ENCODE measurements at regions of chr7 and their contacts with region 1.

Region 1: DNA sequence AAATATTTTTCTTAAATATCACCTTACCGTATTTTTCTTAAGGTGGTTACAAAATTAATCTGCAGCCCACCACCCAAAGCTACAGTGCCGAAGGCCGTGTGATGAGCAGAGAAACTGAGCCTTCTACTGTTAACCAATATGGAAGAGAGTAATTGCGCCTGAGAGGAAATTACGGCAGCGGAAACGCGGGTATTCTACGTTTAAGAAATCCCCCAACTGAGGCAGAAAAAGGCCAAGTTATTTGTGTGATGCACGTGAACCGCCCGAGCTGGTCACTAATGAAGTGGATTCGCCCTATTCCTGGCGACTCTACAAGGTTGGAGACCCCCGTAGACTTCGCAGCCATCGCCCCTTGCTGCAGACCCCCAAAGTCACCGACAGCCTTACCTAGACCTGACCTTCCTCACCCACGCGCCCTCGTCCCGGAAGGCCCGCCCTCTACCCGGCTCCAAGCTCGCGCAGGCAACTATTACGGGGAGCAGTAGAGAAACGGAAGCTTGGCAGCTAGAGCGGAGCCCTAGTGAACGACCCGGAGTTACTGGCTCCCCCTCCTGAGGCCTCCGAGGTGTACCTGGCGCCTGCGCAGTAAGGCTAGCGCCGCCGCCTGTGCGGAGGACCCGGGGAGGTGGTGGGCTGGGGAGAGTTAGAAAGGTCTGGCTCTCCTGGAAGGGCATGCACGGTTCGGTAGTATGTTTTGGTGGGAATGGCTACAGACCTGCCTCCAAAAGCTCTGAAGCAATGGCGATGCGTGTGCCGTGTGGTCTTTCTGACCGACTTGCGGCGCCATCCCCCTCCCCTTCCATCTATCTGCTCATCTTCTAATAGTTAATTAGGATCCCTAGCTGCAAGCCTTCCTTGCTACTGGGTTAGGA is at the start of gene MRPS33:
- DNase-seq: peak; percentile 79 to 97 (median 96)
- ATAC-seq: peak; percentile 99
- H3K4me3 ChIP-seq: peak within 1 kb of the TSS; percentile 82
- H3K4me3 Mint-ChIP-seq: peak within 1 kb of the TSS; percentile 85 to 99 (median 98)
- H3K27ac ChIP-seq: peak within 1 kb of the TSS; percentile 95
- H3K27ac Mint-ChIP-seq: peak within 1 kb of the TSS; percentile 97 to 100 (median 100)
- H3K4me1 ChIP-seq: peaks cover 8 to 16% of the 10 kb centered on the region in 2 donors
- H3K4me1 Mint-ChIP-seq: peaks cover 10 to 49% (median 39%) of the 10 kb centered on the region in 7 donors
- H3K27me3 ChIP-seq: no peaks in the 10 kb centered on the region
- H3K27me3 Mint-ChIP-seq: peaks cover 5 to 29% (median 8%) of the 10 kb centered on the region in 5 donors
- total RNA-seq, gene MRPS33: 25.9 to 69.1 (median 48.4) TPM

Region 2: GRCh38 chr7:139791316-139791715 is 1223.4 kb before region 1 on chr7:
- CTCF ChIA-PET with region 1: no interaction called
- POLR2A ChIA-PET with region 1: no interaction called
- intact Hi-C with region 1: no loop called
- DNase-seq: no peak
- ATAC-seq: no peak
- H3K4me3 ChIP-seq: no peak overlapping the region
- H3K4me3 Mint-ChIP-seq: no peak overlapping the region
- H3K27ac ChIP-seq: no peak overlapping the region
- H3K27ac Mint-ChIP-seq: no peak overlapping the region
- H3K4me1 ChIP-seq: no peaks in the 10 kb centered on the region
- H3K4me1 Mint-ChIP-seq: peaks cover 0 to 1% (median 0%) of the 10 kb centered on the region in 7 donors
- H3K27me3 ChIP-seq: no peaks in the 10 kb centered on the region
- H3K27me3 Mint-ChIP-seq: peaks cover 0 to 8% (median 0%) of the 10 kb centered on the region in 5 donors

Region 3: GRCh38 chr7:140062528-140063299 is 952.0 kb before region 1 on chr7 and contains the start of gene PARP12:
- CTCF ChIA-PET with region 1: no interaction called
- POLR2A ChIA-PET with region 1: no interaction called
- intact Hi-C with region 1: loop called in 1 of 2 experiments (anchors 2 kb)
- DNase-seq: peak; percentile 77 to 86 (median 83)
- ATAC-seq: peak; percentile 91
- H3K4me3 ChIP-seq: peak within 1 kb of the TSS; percentile 79
- H3K4me3 Mint-ChIP-seq: peak within 1 kb of the TSS; percentile 79 to 94 (median 90)
- H3K27ac ChIP-seq: peak within 1 kb of the TSS; percentile 81
- H3K27ac Mint-ChIP-seq: peak within 1 kb of the TSS; percentile 83 to 95 (median 92)
- H3K4me1 ChIP-seq: peaks cover 32 to 38% of the 10 kb centered on the region in 2 donors
- H3K4me1 Mint-ChIP-seq: peaks cover 34 to 55% (median 48%) of the 10 kb centered on the region in 7 donors
- H3K27me3 ChIP-seq: no peaks in the 10 kb centered on the region
- H3K27me3 Mint-ChIP-seq: peaks cover 0 to 7% (median 0%) of the 10 kb centered on the region in 5 donors
- total RNA-seq, gene PARP12: 66.2 to 145 (median 94.5) TPM

Region 4: DNA sequence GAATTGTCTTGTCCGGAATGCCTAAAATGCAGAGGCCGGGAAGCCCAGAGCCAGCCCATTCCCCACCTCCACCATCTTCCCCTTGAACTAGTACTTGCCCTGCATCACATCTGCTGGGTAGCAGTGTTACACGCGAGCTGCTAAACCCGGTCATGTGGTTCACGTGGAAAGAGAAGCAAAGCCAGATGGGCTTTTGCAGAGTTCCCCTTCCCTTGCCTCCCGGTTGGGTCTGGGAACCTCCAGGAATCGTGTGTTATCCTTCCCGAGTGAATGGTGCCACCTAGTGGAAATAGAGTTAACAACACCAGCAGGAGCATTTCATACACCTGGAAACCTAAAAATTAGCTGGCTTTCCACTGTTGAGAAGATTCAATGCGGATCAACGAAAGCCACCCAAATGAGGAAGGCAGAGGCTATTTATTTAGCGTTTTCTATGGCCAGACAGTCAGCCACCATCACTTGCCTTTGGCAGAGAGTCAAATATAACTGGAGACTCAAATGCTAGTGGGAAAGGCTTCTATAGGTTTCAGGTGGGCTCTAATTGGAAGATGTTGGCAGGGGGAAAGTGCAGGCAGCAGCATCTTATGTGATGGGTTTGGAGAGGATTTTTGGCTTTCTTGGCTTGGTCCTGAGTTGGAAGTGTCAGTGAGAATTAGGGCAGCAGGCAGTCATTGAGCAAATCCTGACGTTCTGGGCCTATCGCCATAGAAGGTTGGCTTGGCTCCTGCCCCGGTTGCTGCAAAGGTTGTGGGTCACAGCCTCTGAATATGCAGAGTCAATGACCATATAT is 361.2 kb before region 1 on chr7:
- CTCF ChIA-PET with region 1: interaction called, 3 read pairs
- POLR2A ChIA-PET with region 1: interaction called, 5 read pairs
- intact Hi-C with region 1: loop called (anchors 1 to 5 kb)
- DNase-seq: peak in 5 of 9 donors; percentile 23 to 55 (median 41)
- ATAC-seq: peak; percentile 55
- H3K4me3 ChIP-seq: no peak overlapping the region
- H3K4me3 Mint-ChIP-seq: peak overlapping the region in 4 of 10 donors; percentile 21 to 42 (median 34)
- H3K27ac ChIP-seq: no peak overlapping the region
- H3K27ac Mint-ChIP-seq: peak overlapping the region in 2 of 9 donors; percentile 16 to 63
- H3K4me1 ChIP-seq: peaks cover 0 to 9% of the 10 kb centered on the region in 2 donors
- H3K4me1 Mint-ChIP-seq: peaks cover 6 to 26% (median 21%) of the 10 kb centered on the region in 7 donors
- H3K27me3 ChIP-seq: no peaks in the 10 kb centered on the region
- H3K27me3 Mint-ChIP-seq: peaks cover 5 to 40% (median 14%) of the 10 kb centered on the region in 5 donors

Region 5: GRCh38 chr7:140726281-140726680 is 288.5 kb before region 1 on chr7:
- CTCF ChIA-PET with region 1: interaction called, 4 read pairs
- POLR2A ChIA-PET with region 1: interaction called, 21 read pairs
- intact Hi-C with region 1: loop called in 1 of 2 experiments (anchors 1 kb)
- DNase-seq: peak in 4 of 9 donors; percentile 11 to 31 (median 26)
- ATAC-seq: no peak
- H3K4me3 ChIP-seq: no peak overlapping the region
- H3K4me3 Mint-ChIP-seq: no peak overlapping the region
- H3K27ac ChIP-seq: no peak overlapping the region
- H3K27ac Mint-ChIP-seq: peak overlapping the region in 7 of 9 donors; percentile 36 to 76 (median 53)
- H3K4me1 ChIP-seq: peaks cover 0 to 18% of the 10 kb centered on the region in 2 donors
- H3K4me1 Mint-ChIP-seq: peaks cover 9 to 39% (median 29%) of the 10 kb centered on the region in 7 donors
- H3K27me3 ChIP-seq: no peaks in the 10 kb centered on the region
- H3K27me3 Mint-ChIP-seq: no peaks in the 10 kb centered on the region

Region 6: GRCh38 chr7:141053626-141054025 is 38.9 kb after region 1 on chr7:
- CTCF ChIA-PET with region 1: no interaction called
- POLR2A ChIA-PET with region 1: interaction called, 3 read pairs
- intact Hi-C with region 1: loop called in 1 of 2 experiments (anchors 5 kb)
- DNase-seq: peak; percentile 12 to 62 (median 41)
- ATAC-seq: peak; percentile 96
- H3K4me3 ChIP-seq: no peak overlapping the region
- H3K4me3 Mint-ChIP-seq: peak overlapping the region in 8 of 10 donors; percentile 8 to 63 (median 40)
- H3K27ac ChIP-seq: no peak overlapping the region
- H3K27ac Mint-ChIP-seq: peak overlapping the region; percentile 48 to 90 (median 76)
- H3K4me1 ChIP-seq: peaks cover 7 to 9% of the 10 kb centered on the region in 2 donors
- H3K4me1 Mint-ChIP-seq: peaks cover 3 to 26% (median 19%) of the 10 kb centered on the region in 7 donors
- H3K27me3 ChIP-seq: no peaks in the 10 kb centered on the region
- H3K27me3 Mint-ChIP-seq: peaks cover 0 to 29% (median 10%) of the 10 kb centered on the region in 5 donors

Region 7: DNA sequence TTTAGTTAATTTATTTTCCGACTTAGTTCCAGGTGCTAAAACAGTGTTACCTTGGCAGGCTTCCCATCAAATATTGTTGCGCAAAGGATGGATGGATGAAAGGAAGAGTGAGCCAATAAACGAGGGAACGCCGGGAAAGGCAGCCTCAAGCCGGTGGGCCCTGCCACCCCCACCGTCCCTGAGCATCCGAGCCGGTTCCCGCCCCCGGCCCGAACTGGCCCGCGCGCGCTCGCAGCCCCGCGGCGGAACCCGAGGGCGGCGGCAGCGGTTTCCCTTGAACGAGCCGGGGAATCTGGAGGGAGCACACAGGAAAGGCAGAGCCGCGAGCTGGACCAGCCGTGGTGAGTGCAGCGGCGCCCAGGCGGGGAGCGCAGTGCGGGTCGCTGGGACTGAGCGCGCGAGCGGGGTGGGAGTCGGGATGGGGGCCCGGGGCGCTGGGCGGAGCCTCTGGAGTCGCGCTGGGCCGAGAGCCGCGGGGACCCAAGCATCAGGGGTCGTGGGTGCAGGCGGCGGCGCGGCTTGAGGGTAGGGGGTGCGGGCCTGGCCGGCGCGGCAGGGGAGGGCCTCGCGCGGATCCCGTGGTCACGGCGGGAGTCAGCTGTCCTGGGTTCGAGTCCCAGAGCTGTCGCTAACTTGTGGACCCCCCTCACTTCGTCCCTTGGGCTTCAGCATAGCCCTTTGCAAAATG is 536.5 kb after region 1 on chr7 and contains the start of gene AGK:
- CTCF ChIA-PET with region 1: no interaction called
- POLR2A ChIA-PET with region 1: interaction called, 8 read pairs
- intact Hi-C with region 1: loop called (anchors 1 kb)
- DNase-seq: peak; percentile 61 to 83 (median 74)
- ATAC-seq: peak; percentile 96
- H3K4me3 ChIP-seq: peak within 1 kb of the TSS; percentile 89
- H3K4me3 Mint-ChIP-seq: peak within 1 kb of the TSS; percentile 83 to 99 (median 92)
- H3K27ac ChIP-seq: peak within 1 kb of the TSS; percentile 73
- H3K27ac Mint-ChIP-seq: peak within 1 kb of the TSS; percentile 52 to 96 (median 90)
- H3K4me1 ChIP-seq: peaks cover 12 to 17% of the 10 kb centered on the region in 2 donors
- H3K4me1 Mint-ChIP-seq: peaks cover 14 to 44% (median 40%) of the 10 kb centered on the region in 7 donors
- H3K27me3 ChIP-seq: no peaks in the 10 kb centered on the region
- H3K27me3 Mint-ChIP-seq: peaks cover 0 to 4% (median 0%) of the 10 kb centered on the region in 5 donors
- total RNA-seq, gene AGK: 24.3 to 58.8 (median 29.9) TPM

Region 8: DNA sequence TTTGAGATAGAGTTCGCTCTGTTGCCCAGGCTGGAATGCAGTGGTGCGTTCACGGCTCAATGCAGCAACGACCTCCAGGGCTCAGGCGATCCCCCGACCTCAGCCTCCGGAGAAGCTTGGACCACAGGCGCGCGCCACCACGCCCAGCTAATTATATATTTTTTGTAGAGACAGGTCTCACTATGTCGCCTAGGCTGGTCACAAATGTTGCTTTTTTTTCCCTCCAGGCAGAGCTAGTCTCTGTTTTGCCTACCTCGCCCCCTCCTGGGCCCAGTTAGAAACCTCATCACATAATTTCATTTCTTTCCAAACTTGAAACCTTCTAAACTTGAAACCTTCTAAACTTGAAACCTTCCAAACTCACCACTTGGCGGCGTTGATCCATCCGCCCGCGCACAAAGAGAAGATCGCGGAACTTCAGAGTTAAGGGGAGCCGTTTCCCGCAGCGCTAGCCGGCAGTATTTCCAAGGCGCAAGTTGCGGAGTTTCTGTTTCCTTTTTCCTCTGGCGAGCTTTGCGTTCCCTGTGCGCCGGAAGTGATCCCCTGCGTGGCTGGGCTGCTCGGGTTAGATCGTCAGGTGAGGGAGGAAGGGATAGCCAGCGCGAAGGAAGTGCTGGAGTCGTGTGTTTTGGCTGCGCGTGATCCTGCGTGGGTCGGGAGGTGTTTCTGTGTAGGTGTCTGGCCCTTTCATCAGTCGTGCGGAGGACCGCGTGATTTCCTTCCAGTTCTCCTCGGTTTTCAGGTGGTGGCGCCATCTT is 723.3 kb after region 1 on chr7 and contains the start of gene SSBP1:
- CTCF ChIA-PET with region 1: interaction called, 3 read pairs
- POLR2A ChIA-PET with region 1: interaction called, 16 read pairs
- intact Hi-C with region 1: loop called (anchors 1 kb)
- DNase-seq: peak; percentile 72 to 95 (median 93)
- ATAC-seq: peak; percentile 94
- H3K4me3 ChIP-seq: peak within 1 kb of the TSS; percentile 84
- H3K4me3 Mint-ChIP-seq: peak within 1 kb of the TSS; percentile 92 to 100 (median 98)
- H3K27ac ChIP-seq: peak within 1 kb of the TSS; percentile 77
- H3K27ac Mint-ChIP-seq: peak within 1 kb of the TSS; percentile 95 to 99 (median 98)
- H3K4me1 ChIP-seq: peaks cover 21 to 22% of the 10 kb centered on the region in 2 donors
- H3K4me1 Mint-ChIP-seq: peaks cover 18 to 63% (median 56%) of the 10 kb centered on the region in 7 donors
- H3K27me3 ChIP-seq: no peaks in the 10 kb centered on the region
- H3K27me3 Mint-ChIP-seq: no peaks in the 10 kb centered on the region
- total RNA-seq, gene SSBP1: 86.4 to 148 (median 107) TPM